BJ (cell line): ENCODE measurements at regions of chr5 and their contacts with region 1.

Region 1: DNA sequence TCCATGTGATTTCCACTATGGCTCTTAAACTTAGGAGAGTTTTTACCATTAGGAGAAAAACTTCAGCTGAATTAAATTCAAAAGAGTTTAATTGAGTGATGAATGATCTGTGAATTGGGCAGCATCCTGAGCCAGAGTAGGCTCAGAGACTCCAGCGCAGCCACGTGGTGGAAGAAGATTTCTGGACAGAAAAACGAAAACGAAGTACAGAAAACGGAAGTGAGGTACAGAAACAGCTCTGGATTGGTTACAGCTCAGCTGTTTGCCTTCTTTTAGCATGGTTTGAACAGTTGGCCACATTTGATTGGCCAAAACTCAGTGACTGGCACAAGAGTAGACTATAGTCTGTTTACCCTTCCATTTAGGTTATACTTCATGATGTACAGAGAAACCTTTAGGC is 69.2 kb upstream of the PLPP1 start:
- DNase-seq: no peak
- H3K4me3 ChIP-seq: no peak overlapping the region
- H3K27me3 ChIP-seq: no peaks in the 10 kb centered on the region
- CTCF ChIP-seq: no peak

Region 2: GRCh38 chr5:56601641-56602071 is 997.7 kb after region 1 on chr5:
- CTCF ChIA-PET with region 1: no interaction called
- POLR2A ChIA-PET with region 1: interaction called, 18 read pairs
- DNase-seq: peak; percentile 63
- H3K4me3 ChIP-seq: no peak overlapping the region
- H3K27me3 ChIP-seq: no peaks in the 10 kb centered on the region
- CTCF ChIP-seq: no peak